HEK293 (cell line): ENCODE measurements at regions of chr17 and their contacts with region 1.

Region 1: GRCh38 chr17:8156246-8156992 is 4.2 kb upstream of the PER1 start:
- H3K4me3 ChIP-seq: peak overlapping the region; percentile 45
- H3K27ac ChIP-seq: peak overlapping the region; percentile 69
- H3K4me1 ChIP-seq: peaks cover 31% of the 10 kb centered on the region
- CTCF ChIP-seq: peak; percentile 34

Region 2: GRCh38 chr17:8125157-8125946 is 31.1 kb before region 1 on chr17:
- CTCF ChIA-PET with region 1: interaction called, 38 read pairs
- POLR2A ChIA-PET with region 1: interaction called, 18 read pairs
- H3K4me3 ChIP-seq: peak overlapping the region; percentile 55
- H3K27ac ChIP-seq: peak overlapping the region; percentile 77; the same call in 1 of the 2 replicates
- H3K4me1 ChIP-seq: peaks cover 14% of the 10 kb centered on the region
- CTCF ChIP-seq: no peak

Region 3: GRCh38 chr17:8138672-8139371 is 17.6 kb before region 1 on chr17:
- CTCF ChIA-PET with region 1: interaction called, 91 read pairs
- POLR2A ChIA-PET with region 1: interaction called, 31 read pairs
- H3K4me3 ChIP-seq: peak overlapping the region; percentile 71
- H3K27ac ChIP-seq: peak overlapping the region; percentile 48
- H3K4me1 ChIP-seq: 0 out of 2 replicates have a peak, but pooled peaks cover 4% of the 10 kb centered on the region
- CTCF ChIP-seq: peak; percentile 92

Region 4: GRCh38 chr17:8173056-8173870 is 16.8 kb after region 1 on chr17:
- CTCF ChIA-PET with region 1: interaction called, 7 read pairs
- POLR2A ChIA-PET with region 1: interaction called, 34 read pairs
- H3K4me3 ChIP-seq: peak overlapping the region; percentile 53
- H3K27ac ChIP-seq: peak overlapping the region; percentile 89
- H3K4me1 ChIP-seq: peaks cover 10% of the 10 kb centered on the region
- CTCF ChIP-seq: no peak

Region 5: GRCh38 chr17:8189711-8190477 is 33.5 kb after region 1 on chr17 and contains the start of gene BORCS6:
- CTCF ChIA-PET with region 1: interaction called, 5 read pairs
- POLR2A ChIA-PET with region 1: interaction called, 12 read pairs
- H3K4me3 ChIP-seq: peak within 1 kb of the TSS; percentile 75
- H3K27ac ChIP-seq: peak within 1 kb of the TSS; percentile 75; the same call in 1 of the 2 replicates
- H3K4me1 ChIP-seq: peaks cover 13% of the 10 kb centered on the region
- CTCF ChIP-seq: peak; percentile 88